ENCODE measurements at regions of chr19 and their contacts with region 1.

Region 1: DNA sequence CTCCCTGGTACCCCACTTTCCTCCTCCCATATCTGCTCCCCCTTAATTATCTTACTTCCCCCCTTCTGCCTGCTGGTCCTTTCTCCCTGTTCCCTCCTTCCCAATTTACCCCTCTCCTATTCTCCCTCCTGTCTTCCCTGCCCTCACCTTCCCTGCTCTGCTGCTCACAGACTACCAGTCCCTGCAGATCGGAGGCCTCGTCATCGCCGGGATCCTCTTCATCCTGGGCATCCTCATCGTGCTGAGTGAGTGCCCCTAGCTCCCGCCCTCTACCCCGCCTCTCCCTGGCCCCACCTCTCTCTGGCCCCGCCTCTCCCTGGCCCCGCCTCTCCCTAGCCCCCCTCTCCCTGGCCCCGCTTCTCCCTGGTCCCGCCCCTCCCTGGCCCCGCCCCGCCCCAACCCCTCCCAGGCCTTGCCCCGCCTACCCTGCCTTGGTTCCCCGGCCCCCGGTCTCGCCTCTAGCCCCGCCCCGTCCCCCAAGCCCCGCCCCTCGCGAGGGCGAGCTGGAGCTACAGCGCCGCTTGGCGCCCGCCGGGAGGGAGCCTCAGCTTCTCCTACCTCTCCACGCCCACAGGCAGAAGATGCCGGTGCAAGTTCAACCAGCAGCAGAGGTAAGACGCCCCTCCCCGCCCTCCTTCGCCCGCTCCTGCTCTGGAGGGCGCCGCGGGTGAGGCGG is 2.0 kb upstream of the FXYD7 start:
- DNase-seq: peak; percentile 92 to 98
- H3K4me3 ChIP-seq: no peak overlapping the region
- CTCF ChIP-seq: no peak
- POLR2A ChIP-seq: no peak

Region 2: DNA sequence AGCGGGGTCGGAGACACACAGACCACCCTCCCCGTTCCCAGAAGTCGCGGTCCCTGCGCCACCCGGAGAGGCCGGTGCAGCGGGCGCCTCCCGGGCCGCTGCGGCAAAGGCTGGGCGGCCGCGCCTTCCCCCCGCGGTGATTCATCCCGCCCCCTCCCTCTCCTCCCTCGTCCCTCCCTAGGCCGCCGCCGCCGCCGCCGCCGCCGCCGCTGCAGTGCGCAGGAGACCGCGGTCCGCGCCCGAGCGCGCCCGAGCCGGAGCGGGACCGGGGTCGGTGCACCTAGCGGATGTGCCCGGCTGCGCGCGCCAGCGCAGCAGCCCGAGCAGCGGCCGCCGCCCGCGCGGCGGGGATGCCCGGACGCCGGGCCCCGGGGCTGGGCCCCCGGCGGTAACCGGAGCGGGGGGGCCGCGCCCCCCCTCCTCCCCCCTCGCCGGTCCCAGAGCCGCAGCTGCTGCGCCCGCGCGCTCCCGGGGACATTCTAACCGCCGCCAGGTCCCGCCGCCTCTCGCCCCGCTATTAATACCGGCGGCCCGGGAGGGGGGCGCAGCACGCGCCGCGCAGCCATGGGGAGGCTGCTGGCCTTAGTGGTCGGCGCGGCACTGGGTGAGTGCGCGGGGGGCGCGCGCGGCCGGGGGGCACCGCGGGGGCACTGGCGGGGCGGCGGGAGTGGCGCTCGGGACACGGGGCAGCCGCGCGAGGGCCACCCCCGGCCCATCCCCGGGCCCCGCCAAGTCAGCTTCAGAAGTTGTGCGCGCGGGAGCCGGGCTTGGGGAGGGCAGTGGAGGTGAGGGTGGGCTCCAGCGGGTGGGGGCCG is 110.6 kb before region 1 on chr19 and contains the start of gene SCN1B:
- intact Hi-C with region 1: no loop called
- DNase-seq: peak in 1 of 2 donors; percentile 92
- H3K4me3 ChIP-seq: peak within 1 kb of the TSS; percentile 48
- CTCF ChIP-seq: no peak
- POLR2A ChIP-seq: no peak
- total RNA-seq, gene SCN1B: 1.1 to 4.4 (median 3.0) TPM

Region 3: DNA sequence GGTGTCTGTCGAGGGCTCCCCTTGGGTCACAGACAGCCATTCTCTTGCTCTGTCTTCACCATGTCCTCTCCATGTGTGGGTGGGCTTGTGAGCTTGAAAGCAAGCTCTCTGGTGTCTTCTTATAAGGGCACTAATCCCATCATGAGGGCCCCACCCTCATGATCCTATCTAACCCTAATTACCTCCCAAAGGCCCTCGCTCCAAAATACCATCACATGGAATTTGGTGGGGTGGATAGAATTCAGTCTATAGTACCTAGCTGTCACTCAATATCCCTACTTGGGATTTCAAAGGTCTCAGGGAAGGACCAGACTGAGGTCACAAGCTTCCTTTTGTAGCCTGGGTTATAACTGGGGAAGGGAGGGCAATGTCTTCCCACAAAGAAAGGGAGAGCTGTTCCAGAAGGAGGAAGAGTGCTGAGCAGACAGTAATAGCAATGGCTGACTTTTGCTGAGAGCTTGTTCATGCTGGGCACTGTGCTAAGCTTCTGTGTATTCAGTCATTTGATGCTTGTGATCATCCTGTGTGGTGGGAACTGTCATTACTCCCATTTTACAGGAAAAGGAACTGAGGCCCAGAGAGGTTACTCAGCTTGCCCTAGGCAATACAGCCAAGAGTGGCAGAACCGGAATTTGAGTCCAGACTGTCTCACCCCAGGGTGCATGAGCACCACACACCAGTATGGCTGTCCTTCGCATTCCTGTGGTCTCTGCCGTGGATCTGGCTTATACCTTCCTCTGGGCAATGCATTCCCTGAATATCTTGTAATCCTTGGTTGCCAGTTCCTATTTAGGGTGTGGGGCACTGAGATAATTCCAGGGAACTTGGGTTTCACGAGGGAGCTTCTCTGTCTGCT is 21.6 kb after region 1 on chr19:
- intact Hi-C with region 1: no loop called
- DNase-seq: no peak
- H3K4me3 ChIP-seq: no peak overlapping the region
- CTCF ChIP-seq: no peak
- POLR2A ChIP-seq: no peak

Region 4: GRCh38 chr19:35213663-35214632 is 72.8 kb after region 1 on chr19:
- intact Hi-C with region 1: no loop called
- DNase-seq: peak; percentile 87 to 88
- H3K4me3 ChIP-seq: no peak overlapping the region
- CTCF ChIP-seq: no peak
- POLR2A ChIP-seq: no peak

Region 5: DNA sequence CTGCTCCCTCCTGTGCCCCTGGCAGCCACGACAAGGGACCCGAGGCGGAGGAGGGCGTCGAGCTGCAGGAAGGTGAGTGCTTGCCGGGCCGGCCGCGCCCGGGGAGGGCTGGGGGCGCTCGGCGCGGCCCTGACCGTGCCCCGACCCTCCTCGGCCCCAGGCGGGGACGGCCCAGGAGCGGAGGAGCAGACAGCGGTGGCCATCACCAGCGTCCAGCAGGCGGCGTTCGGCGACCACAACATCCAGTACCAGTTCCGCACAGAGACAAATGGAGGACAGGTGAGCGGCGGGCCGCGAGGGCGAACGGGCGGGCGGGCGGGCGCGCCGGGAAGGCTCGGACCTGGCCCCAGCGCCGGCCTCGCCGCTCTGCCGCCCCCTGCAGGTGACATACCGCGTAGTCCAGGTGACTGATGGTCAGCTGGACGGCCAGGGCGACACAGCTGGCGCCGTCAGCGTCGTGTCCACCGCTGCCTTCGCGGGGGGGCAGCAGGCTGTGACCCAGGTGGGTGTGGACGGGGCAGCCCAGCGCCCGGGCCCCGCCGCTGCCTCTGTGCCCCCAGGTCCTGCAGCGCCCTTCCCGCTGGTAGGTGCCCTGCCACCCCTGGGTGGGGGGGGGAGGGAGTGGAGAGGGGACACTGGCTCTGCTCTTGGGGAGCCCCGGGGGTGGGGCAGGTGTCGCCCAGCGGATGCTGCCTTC is 128.5 kb after region 1 on chr19:
- intact Hi-C with region 1: loop called (anchors 10 kb)
- DNase-seq: peak; percentile 77 to 96
- H3K4me3 ChIP-seq: peak overlapping the region; percentile 48
- CTCF ChIP-seq: no peak
- POLR2A ChIP-seq: no peak